Esophagus muscularis mucosa (tissue), 4 donors: ENCODE measurements at regions of chr4 and their contacts with region 1.

Region 1: GRCh38 chr4:185134307-185134869 is 8.7 kb upstream of the SLC25A4 start:
- DNase-seq: no peak
- H3K4me3 ChIP-seq: no peak overlapping the region
- H3K27ac ChIP-seq: no peak overlapping the region
- H3K4me1 ChIP-seq: peaks cover 0 to 9% (median 0%) of the 10 kb centered on the region in 4 donors
- H3K27me3 ChIP-seq: no peaks in the 10 kb centered on the region
- CTCF ChIP-seq: peak; percentile 69 to 77 (median 77)
- EP300 ChIP-seq: no peak
- POLR2A ChIP-seq: no peak

Region 2: DNA sequence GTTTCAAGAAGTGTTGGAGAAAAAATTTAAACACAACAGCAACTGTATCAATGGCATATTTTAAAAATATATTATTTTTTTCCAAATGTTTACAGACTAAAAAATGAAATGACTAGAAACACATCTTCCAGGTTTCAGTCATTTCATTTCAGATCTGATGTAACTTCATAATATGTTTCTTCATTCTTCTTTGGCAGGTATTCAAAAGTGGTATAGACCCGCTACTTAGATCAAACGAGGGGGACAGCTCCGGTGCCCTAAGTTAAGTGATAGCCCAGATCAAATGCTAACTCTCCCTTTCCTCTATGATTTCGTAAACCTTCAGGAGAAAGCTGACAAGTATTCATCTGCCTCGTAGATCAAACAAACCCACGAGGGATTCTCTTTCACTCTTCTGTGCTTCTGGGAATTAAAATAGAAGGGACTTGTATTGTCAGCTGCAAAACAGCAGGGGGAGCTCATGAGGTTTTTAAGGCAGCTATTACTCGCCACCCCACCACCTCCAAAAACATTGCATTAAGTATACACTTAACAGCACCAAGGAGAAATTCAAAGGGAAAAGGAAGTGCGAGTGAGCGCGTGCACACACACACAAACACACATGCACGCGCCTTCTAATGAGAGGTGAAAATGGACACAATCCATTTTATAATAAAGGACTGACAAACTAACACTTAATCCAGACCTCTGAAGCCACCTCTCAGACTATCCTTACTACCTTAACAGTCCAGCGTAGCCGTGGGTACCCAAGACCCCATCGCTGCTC is 94.7 kb before region 1 on chr4:
- intact Hi-C with region 1: loop called (anchors 1 kb)
- DNase-seq: peak; percentile 90
- H3K4me3 ChIP-seq: peak overlapping the region in 2 of 4 donors; percentile 2 to 11
- H3K27ac ChIP-seq: no peak overlapping the region
- H3K4me1 ChIP-seq: peaks cover 0 to 7% (median 6%) of the 10 kb centered on the region in 4 donors
- H3K27me3 ChIP-seq: no peaks in the 10 kb centered on the region
- CTCF ChIP-seq: peak; percentile 87 to 92 (median 90)
- EP300 ChIP-seq: no peak
- POLR2A ChIP-seq: no peak

Region 3: DNA sequence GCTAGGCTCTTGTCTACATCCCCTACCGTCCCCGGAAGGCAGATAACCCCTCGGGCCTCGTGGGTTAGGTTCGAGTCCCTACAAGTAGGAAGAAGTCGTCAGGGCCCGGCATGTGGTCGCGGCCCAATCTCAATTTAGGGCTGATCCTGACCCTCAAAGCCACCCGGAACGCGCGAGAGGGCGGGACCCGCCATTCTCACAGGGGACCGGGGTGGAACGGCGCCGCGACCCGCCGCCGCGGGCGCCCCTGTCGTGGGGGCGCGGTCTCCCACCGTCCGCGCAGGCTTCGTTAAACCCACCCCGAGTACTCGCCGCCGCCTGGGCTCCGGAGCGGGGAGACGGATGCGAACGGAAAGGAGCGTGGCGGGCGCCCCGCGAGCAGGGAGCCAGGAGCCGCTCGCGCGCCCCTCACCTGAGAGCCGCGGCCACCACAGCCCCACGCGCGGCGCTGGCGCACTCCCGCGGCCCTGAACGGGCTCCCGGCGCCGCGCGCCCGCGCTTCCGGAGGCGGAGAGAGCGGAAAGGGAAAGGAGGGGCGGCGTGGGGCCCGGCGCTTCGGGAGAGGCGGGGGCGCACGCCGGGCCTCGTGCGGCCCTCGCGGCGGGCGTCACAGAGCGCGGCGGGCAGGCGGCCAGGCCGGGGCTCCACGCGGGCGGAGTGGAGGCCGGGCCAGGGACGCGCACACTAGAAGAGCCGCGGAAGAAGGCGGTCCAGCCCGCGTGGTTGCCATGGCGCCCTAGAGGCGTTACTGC is 69.3 kb after region 1 on chr4 and contains the start of gene CFAP97:
- intact Hi-C with region 1: no loop called
- DNase-seq: peak; percentile 96
- H3K4me3 ChIP-seq: peak within 1 kb of the TSS; percentile 79 to 91 (median 88)
- H3K27ac ChIP-seq: peak within 1 kb of the TSS; percentile 98 to 99 (median 99)
- H3K4me1 ChIP-seq: peaks cover 16 to 40% (median 29%) of the 10 kb centered on the region in 4 donors
- H3K27me3 ChIP-seq: no peaks in the 10 kb centered on the region
- CTCF ChIP-seq: peak in 1 of 3 experiments; percentile 12
- EP300 ChIP-seq: no peak
- POLR2A ChIP-seq: peak; percentile 46
- total RNA-seq, gene CFAP97: 30.2 to 36.8 (median 35.1) TPM